ENCODE measurements at regions of chr6 and their contacts with region 1.

Region 1: DNA sequence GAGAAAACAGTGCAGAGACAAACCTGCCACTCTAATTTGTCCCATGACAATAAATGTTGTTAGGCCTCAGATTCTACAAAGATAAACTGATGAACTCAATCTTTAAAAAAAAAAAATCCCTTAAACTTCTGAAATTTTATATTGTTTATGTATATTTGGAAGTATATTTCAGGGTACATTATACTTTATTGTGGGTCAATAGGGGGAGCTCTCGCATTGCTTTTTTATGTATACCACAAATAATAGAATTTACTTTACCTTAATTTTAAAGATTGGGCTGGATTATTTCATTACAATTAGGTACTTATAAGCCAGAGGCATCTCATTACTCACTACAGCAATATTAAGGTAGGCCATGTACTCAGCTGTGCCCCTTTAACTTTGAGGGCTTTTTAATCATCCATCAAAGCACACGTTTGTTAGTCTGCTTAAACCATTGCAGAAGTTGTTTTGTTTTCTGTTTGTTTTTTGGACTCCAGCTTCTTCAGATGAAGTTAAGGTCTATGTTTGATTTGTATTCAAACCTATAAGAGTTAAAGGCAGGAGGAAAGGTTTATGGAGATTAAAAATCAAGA is 56.3 kb upstream of the EYA4 start:
- DNase-seq: no peak
- H3K4me3 ChIP-seq: no peak overlapping the region
- H3K4me3 Mint-ChIP-seq: no peak overlapping the region
- H3K27ac Mint-ChIP-seq: no peak overlapping the region
- H3K4me1 ChIP-seq: peaks cover 16% of the 10 kb centered on the region; the same call in 1 of the 2 replicates
- H3K4me1 Mint-ChIP-seq: no peaks in the 10 kb centered on the region
- H3K27me3 ChIP-seq: no peaks in the 10 kb centered on the region
- H3K27me3 Mint-ChIP-seq: no peaks in the 10 kb centered on the region
- CTCF ChIP-seq: peak; percentile 38 to 40

Region 2: GRCh38 chr6:132962936-132963868 is 221.7 kb before region 1 on chr6:
- CTCF ChIA-PET with region 1: no interaction called
- POLR2A ChIA-PET with region 1: no interaction called
- intact Hi-C with region 1: loop called (anchors 10 kb)
- DNase-seq: peak; percentile 69 to 81
- H3K4me3 ChIP-seq: no peak overlapping the region
- H3K4me3 Mint-ChIP-seq: no peak overlapping the region
- H3K27ac Mint-ChIP-seq: no peak overlapping the region
- H3K4me1 ChIP-seq: no peaks in the 10 kb centered on the region
- H3K4me1 Mint-ChIP-seq: no peaks in the 10 kb centered on the region
- H3K27me3 ChIP-seq: no peaks in the 10 kb centered on the region
- H3K27me3 Mint-ChIP-seq: peaks cover 6% of the 10 kb centered on the region
- CTCF ChIP-seq: peak; percentile 87 to 88

Region 3: GRCh38 chr6:133093956-133094355 is 90.9 kb before region 1 on chr6:
- CTCF ChIA-PET with region 1: no interaction called
- POLR2A ChIA-PET with region 1: no interaction called
- intact Hi-C with region 1: no loop called
- DNase-seq: no peak
- H3K4me3 ChIP-seq: no peak overlapping the region
- H3K4me3 Mint-ChIP-seq: no peak overlapping the region
- H3K27ac Mint-ChIP-seq: no peak overlapping the region
- H3K4me1 ChIP-seq: no peaks in the 10 kb centered on the region
- H3K4me1 Mint-ChIP-seq: no peaks in the 10 kb centered on the region
- H3K27me3 ChIP-seq: no peaks in the 10 kb centered on the region
- H3K27me3 Mint-ChIP-seq: peaks cover 17% of the 10 kb centered on the region
- CTCF ChIP-seq: no peak

Region 4: DNA sequence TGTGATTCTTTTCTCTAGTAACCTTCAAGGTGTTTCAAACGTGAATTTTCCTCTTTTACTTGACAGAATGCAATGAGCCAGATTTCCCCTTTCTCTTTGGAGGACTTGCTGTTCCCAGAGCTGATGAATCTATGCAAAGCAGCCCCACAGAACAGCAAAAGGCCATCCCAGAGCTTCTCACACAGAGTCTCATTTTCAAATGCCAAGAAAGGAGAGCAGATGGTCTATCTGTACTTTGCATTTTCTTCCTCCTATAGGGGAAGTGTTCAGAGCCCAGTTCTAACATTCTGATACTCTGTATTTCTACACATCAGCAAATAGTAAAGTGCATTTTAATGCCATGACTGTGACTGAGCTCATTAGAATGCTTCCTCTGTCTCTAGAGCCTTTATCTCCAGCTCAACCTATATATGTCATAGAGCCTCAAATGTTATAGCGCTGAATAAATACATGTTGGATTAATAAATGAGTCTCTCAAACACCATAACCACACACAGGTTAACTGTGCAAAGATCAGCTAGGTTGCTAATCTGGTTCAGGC is 25.6 kb before region 1 on chr6:
- CTCF ChIA-PET with region 1: no interaction called
- POLR2A ChIA-PET with region 1: no interaction called
- intact Hi-C with region 1: no loop called
- DNase-seq: no peak
- H3K4me3 ChIP-seq: no peak overlapping the region
- H3K4me3 Mint-ChIP-seq: no peak overlapping the region
- H3K27ac Mint-ChIP-seq: no peak overlapping the region
- H3K4me1 ChIP-seq: no peaks in the 10 kb centered on the region
- H3K4me1 Mint-ChIP-seq: no peaks in the 10 kb centered on the region
- H3K27me3 ChIP-seq: no peaks in the 10 kb centered on the region
- H3K27me3 Mint-ChIP-seq: peaks cover 3% of the 10 kb centered on the region
- CTCF ChIP-seq: no peak

Region 5: DNA sequence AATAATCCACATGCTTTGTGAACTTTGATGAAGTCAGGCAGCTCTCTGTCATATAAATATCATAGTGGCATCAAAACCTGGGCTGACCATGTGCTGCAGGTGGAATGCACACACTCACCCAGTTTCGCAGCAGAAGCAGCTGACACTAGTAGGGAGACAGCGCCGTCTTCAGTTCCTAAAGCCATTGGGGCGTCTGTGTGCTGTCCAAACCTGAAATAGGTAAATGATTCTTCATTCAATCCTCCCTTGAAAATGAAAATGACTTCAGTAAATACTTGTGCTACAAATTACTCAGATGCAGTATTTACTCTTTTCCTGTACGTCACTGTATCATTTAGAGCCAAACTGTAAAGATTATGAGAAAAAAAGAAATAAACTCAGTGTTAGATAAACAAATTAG is 183.8 kb after region 1 on chr6:
- CTCF ChIA-PET with region 1: no interaction called
- POLR2A ChIA-PET with region 1: no interaction called
- intact Hi-C with region 1: loop called (anchors 10 kb)
- DNase-seq: peak in 1 of 2 experiments; percentile 11
- H3K4me3 ChIP-seq: no peak overlapping the region
- H3K4me3 Mint-ChIP-seq: no peak overlapping the region
- H3K27ac Mint-ChIP-seq: no peak overlapping the region
- H3K4me1 ChIP-seq: no peaks in the 10 kb centered on the region
- H3K4me1 Mint-ChIP-seq: no peaks in the 10 kb centered on the region
- H3K27me3 ChIP-seq: no peaks in the 10 kb centered on the region; the same call in 1 of the 2 replicates
- H3K27me3 Mint-ChIP-seq: peaks cover 12% of the 10 kb centered on the region
- CTCF ChIP-seq: peak in 1 of 2 experiments; percentile 39